ENCODE measurements at regions of chr4 and their contacts with region 1.

Region 1: DNA sequence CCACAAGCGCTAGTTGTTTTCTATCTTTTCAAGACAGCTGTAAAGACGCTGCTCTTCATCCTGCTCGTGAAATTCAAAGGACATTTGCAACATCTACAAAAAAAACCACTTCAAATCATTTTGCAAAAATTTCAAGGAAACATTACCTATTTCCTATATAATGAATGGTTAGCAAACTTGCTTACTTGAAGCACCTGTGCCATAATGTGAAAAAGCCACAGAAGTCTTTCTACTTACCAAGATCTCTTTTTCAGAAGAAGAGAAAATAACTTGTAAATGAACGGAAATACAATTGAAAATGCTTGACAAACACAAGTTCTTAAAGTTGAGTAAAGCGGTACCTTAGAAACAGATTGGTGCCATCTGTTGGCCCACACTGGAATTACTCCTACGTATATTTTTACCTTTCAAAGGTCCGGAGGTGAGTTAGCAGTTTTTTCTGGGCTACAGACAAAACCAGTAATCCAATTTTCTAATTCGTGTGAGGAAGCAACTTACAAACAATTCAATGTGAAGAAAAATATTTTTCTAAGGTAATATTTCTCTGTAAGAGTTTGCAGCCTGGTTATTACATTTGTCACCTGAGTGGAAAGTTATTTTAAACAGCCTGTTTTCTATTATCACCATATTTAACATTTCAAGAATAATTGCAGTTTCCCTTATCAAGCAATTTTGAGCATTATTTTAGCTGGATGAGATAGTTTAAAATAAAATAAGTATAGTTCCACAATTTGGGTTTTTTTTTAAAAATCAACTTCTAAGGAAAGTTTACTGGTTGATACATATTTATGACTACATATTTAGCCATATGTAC is at the start of gene TLR6:
- DNase-seq: peak in 1 of 2 experiments; percentile 63
- H3K4me3 ChIP-seq: no peak within 1 kb of the TSS
- H3K27ac ChIP-seq: no peak within 1 kb of the TSS
- H3K4me1 ChIP-seq: peaks cover 0 to 3% (median 1%) of the 10 kb centered on the region in 4 experiments; a peak in 1 of 7 replicates
- H3K27me3 ChIP-seq: no peaks in the 10 kb centered on the region
- CTCF ChIP-seq: peak in 2 of 3 experiments; percentile 48 to 69; a peak in 2 of 4 replicates
- EP300 ChIP-seq: no peak
- POLR2A ChIP-seq: no peak
- RAD21 ChIP-seq: peak; percentile 48 to 56
- total RNA-seq, gene TLR6: 0.08 and 0.09 TPM in 2 replicates

Region 2: DNA sequence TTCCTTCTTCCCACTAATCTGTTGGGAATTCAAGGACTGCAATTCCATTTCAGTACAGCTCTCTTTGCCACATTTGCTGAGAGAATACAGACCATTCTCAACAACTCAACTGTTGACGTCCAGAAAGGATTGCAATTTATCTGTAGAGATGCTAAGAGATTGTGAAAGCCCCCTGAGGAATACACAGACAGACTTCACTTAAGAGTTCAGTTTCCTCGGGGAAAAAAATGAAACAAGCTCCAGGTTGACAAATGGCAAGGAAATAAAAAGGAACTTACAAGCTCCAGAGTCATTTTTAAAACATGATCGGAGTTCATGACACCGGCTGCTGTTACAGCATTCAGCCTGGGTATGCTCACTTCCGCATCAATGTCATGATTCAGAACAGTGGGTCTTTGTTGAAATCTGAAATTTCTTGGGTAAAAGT is 87.8 kb before region 1 on chr4:
- CTCF ChIA-PET with region 1: interaction called, 15 read pairs
- POLR2A ChIA-PET with region 1: no interaction called
- DNase-seq: no peak
- H3K4me3 ChIP-seq: no peak overlapping the region
- H3K27ac ChIP-seq: no peak overlapping the region
- H3K4me1 ChIP-seq: no peaks in the 10 kb centered on the region
- H3K27me3 ChIP-seq: no peaks in the 10 kb centered on the region
- CTCF ChIP-seq: no peak
- EP300 ChIP-seq: no peak
- POLR2A ChIP-seq: no peak
- RAD21 ChIP-seq: no peak

Region 3: GRCh38 chr4:38832624-38833528 is 23.9 kb before region 1 on chr4:
- CTCF ChIA-PET with region 1: interaction called, 10 read pairs
- POLR2A ChIA-PET with region 1: no interaction called
- DNase-seq: peak in 1 of 2 experiments; percentile 52
- H3K4me3 ChIP-seq: no peak overlapping the region
- H3K27ac ChIP-seq: no peak overlapping the region
- H3K4me1 ChIP-seq: no peaks in the 10 kb centered on the region
- H3K27me3 ChIP-seq: no peaks in the 10 kb centered on the region
- CTCF ChIP-seq: peak; percentile 54 to 68 (median 64)
- EP300 ChIP-seq: no peak
- POLR2A ChIP-seq: no peak
- RAD21 ChIP-seq: peak; percentile 8 to 25; a peak in 1 of 4 replicates

Region 4: GRCh38 chr4:38872604-38873006 is 15.9 kb after region 1 on chr4:
- CTCF ChIA-PET with region 1: interaction called, 62 read pairs
- POLR2A ChIA-PET with region 1: interaction called, 3 read pairs
- DNase-seq: no peak
- H3K4me3 ChIP-seq: no peak overlapping the region
- H3K27ac ChIP-seq: no peak overlapping the region
- H3K4me1 ChIP-seq: peaks cover 3 to 7% (median 5%) of the 10 kb centered on the region in 4 experiments; a peak in 6 of 7 replicates
- H3K27me3 ChIP-seq: peaks cover 0 to 4% (median 0%) of the 10 kb centered on the region in 4 experiments; a peak in 2 of 7 replicates
- CTCF ChIP-seq: no peak
- EP300 ChIP-seq: no peak
- POLR2A ChIP-seq: no peak
- RAD21 ChIP-seq: no peak

Region 5: DNA sequence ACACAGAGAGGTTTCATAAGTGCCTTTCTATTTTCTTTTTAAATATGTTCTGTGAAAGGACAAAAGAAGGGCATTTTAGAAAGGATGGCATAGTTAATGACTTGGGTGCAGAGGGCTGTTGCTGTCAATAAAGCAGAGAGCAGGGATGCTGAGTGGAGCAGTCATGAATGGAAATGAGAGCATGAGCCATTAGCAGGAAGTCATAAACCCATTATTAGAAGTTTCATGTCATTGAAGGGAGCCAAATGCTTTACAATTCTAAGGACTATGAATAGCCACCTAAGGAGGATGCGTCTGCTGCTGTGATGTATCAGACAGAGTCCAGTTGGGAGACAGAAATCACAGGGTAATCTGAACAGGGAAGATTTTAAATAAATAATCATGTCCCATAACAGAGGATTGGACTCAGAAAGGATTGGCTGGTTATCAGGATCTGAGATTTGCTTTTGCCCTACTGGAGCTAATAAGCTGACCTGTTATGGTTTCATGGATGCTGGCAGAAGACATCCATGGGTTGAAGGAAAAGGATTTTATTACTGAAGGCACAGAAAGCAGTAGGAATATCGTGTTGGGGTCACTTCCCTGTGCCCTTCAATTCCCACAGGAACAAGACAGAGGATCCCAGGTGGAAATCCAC is 278.1 kb after region 1 on chr4:
- CTCF ChIA-PET with region 1: interaction called, 14 read pairs
- POLR2A ChIA-PET with region 1: no interaction called
- DNase-seq: no peak
- H3K4me3 ChIP-seq: no peak overlapping the region
- H3K27ac ChIP-seq: no peak overlapping the region
- H3K4me1 ChIP-seq: peaks cover 0 to 3% (median 0%) of the 10 kb centered on the region in 4 experiments; a peak in 1 of 7 replicates
- H3K27me3 ChIP-seq: no peaks in the 10 kb centered on the region
- CTCF ChIP-seq: no peak
- EP300 ChIP-seq: no peak
- POLR2A ChIP-seq: no peak
- RAD21 ChIP-seq: no peak

Measured in H1 (cell line).